ENCODE measurements at regions of chr10 and their contacts with region 1.

Region 1: DNA sequence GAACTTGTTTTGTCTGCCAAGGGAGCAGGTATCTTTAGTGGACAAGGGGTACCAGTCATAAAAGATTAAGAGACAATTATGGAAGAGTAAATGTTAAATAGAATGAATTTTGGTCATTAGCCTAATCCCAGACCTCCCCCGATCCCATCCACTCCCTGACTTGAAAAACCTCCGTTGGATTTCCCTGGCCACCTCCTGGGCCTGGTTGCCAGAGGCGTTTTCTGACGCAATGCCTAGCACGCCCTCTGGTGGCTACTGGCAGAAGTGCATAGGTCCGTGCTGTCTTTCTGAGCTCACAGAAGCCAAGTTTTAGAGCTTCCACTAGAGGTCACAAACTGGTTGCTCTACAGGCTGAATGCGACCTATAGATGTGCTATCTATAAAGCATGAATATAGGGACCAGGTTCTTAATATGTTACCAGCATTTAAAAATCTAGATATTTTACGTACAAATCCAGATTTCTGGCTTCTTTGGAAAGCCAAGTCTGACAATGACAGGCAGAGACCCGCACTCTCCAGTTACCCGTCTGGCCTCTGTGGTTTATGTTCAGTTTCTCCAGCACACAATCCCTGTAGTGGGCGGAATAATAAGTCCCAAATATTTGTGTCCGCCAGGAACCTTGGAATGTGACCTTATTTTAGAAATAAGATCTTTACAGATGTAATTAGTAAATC is 39.8 kb downstream of the SPOCK2 start:
- DNase-seq: peak; percentile 57 to 93
- H3K4me3 ChIP-seq: no peak overlapping the region
- H3K27ac ChIP-seq: no peak overlapping the region
- H3K4me1 ChIP-seq: peaks cover 0 to 5% of the 10 kb centered on the region in 2 donors
- H3K27me3 ChIP-seq: no peaks in the 10 kb centered on the region
- CTCF ChIP-seq: peak; percentile 98 to 99 (median 98)

Region 2: GRCh38 chr10:71319042-71319799 is 729.4 kb before region 1 on chr10 and contains the start of gene SLC29A3:
- intact Hi-C with region 1: loop called (anchors 10 kb)
- DNase-seq: peak in 1 of 2 donors; percentile 86
- H3K4me3 ChIP-seq: peak within 1 kb of the TSS; percentile 74 to 88
- H3K27ac ChIP-seq: peak within 1 kb of the TSS; percentile 54 to 69
- H3K4me1 ChIP-seq: peaks cover 5 to 7% of the 10 kb centered on the region in 2 donors
- H3K27me3 ChIP-seq: no peaks in the 10 kb centered on the region
- CTCF ChIP-seq: peak; percentile 23 to 69 (median 61)
- total RNA-seq, gene SLC29A3: 0.64 TPM

Region 3: GRCh38 chr10:71893920-71894319 is 154.7 kb before region 1 on chr10:
- intact Hi-C with region 1: loop called (anchors 1 kb)
- DNase-seq: no peak
- H3K4me3 ChIP-seq: no peak overlapping the region
- H3K27ac ChIP-seq: no peak overlapping the region
- H3K4me1 ChIP-seq: no peaks in the 10 kb centered on the region
- H3K27me3 ChIP-seq: no peaks in the 10 kb centered on the region
- CTCF ChIP-seq: no peak

Region 4: DNA sequence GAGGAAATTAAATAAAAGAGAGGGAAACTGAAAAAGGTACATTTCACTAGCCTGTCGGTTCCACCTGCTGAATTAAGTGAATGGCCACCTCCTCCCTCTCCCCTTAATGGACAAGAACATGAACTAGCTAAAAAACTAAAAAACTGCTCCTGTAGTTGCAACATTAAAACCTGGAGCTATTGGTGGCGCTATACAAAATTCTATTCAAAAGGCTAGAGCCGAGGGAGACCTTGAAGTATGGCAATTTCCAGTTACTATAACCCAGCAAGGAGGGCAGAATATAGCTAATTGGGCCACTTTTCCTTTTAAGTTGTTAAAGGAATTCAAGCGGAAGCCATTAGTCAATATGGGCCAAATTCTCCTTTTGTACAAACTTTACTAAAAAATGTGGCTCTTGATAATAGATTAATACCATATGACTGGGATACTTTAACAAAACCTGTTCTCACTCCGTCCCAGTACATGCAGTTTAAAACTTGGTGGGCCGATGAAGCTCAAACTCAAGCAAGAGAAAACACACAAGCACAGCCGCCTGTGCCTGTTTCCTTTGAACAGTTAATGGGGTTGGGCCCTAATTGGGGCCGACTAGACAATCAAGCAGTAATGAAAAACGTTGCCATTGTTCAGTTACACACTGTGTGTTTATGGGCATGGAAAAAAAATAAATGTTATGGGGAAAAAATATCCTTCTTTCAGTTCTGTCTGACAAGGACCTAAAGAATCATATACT is 90.9 kb before region 1 on chr10:
- intact Hi-C with region 1: loop called (anchors 1 kb)
- DNase-seq: no peak
- H3K4me3 ChIP-seq: no peak overlapping the region
- H3K27ac ChIP-seq: no peak overlapping the region
- H3K4me1 ChIP-seq: peaks cover 0 to 3% of the 10 kb centered on the region in 2 donors
- H3K27me3 ChIP-seq: no peaks in the 10 kb centered on the region
- CTCF ChIP-seq: no peak

Region 5: DNA sequence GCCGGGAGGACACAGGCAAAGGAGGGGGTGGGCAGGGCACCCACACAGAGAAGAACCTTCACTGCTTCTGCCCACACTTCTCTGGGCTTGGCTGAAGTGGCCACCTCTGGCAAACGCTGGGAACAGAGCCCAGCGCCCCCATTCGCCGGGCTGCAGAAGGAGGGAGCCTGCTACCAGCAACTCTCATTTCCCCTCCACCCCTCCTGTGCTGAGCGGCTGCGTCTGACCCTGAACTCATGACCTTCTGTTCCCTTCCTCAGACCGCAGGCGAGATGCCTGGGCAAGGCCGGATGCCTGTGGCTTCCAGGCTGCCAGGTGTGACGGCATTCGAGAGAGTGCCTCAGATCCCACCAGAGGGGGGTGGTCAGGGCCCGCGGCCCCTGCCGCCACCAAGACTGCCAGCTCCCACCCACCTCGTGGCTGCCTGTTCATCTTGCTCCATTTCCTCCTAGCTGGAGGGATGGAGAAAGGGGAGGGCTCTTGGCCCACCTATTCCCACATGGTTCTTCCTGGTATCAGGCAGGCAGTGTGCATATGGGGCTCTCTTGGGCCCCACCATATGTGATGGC is 286.3 kb after region 1 on chr10:
- intact Hi-C with region 1: loop called (anchors 2 kb)
- DNase-seq: peak; percentile 87 to 93
- H3K4me3 ChIP-seq: no peak overlapping the region
- H3K27ac ChIP-seq: peak overlapping the region; percentile 66 to 94
- H3K4me1 ChIP-seq: peaks cover 0 to 49% of the 10 kb centered on the region in 2 donors
- H3K27me3 ChIP-seq: no peaks in the 10 kb centered on the region
- CTCF ChIP-seq: no peak

Region 6: DNA sequence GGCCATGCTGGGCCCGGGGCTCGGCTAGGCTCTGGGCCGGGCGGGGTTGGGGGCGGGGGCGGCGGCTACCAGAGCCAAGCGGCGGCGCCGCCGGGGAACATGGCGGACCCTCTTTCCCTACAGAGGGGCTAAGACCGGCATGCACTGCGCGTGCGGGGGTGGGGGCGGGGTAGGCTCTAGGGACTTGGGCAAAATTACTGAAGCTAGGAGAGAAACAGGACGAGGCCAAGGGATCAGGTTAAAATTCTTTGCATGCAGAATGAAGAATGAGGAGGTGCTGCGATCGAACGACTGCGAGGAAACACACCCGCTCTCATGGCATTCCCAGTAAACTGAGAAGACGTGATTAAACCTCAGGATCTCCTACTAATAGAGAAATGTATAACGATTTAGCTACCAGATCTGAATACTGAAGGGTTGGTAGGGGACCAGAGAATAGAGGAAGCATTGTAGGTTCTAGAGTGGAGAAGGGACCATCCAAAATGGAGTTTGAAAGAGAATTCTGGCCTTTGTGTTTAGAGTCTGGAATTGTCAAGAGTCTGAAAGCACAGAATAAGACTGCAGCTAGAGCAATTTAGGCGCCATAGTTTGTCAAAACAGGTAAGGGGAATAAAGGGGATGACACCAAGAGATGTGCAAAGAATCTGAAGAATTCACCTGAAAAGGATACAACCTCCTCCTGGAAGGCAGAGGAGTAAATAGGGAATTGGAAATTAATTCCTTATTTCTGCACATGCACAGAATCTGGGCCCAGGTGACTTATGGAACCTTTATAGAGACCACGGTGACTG is 1447.5 kb after region 1 on chr10 and contains the start of gene PPP3CB:
- intact Hi-C with region 1: no loop called
- DNase-seq: peak; percentile 75 to 95
- H3K4me3 ChIP-seq: peak within 1 kb of the TSS; percentile 63 to 88
- H3K27ac ChIP-seq: peak within 1 kb of the TSS; percentile 95 to 97
- H3K4me1 ChIP-seq: peaks cover 6 to 19% of the 10 kb centered on the region in 2 donors
- H3K27me3 ChIP-seq: no peaks in the 10 kb centered on the region
- CTCF ChIP-seq: no peak
- total RNA-seq, gene PPP3CB: 23.0 TPM